SK-N-SH (cell line): ENCODE measurements at regions of chr7 and their contacts with region 1.

Region 1: GRCh38 chr7:129644634-129645230 is 33.2 kb downstream of the NRF1 start:
- DNase-seq: peak; percentile 53
- H3K4me3 ChIP-seq: no peak overlapping the region
- H3K27ac ChIP-seq: no peak overlapping the region
- H3K4me1 ChIP-seq: peaks cover 2 to 9% of the 10 kb centered on the region in 2 experiments; a peak in 2 of 4 replicates
- H3K27me3 ChIP-seq: no peaks in the 10 kb centered on the region
- CTCF ChIP-seq: peak; percentile 84
- EP300 ChIP-seq: no peak
- RAD21 ChIP-seq: peak; percentile 89

Region 2: DNA sequence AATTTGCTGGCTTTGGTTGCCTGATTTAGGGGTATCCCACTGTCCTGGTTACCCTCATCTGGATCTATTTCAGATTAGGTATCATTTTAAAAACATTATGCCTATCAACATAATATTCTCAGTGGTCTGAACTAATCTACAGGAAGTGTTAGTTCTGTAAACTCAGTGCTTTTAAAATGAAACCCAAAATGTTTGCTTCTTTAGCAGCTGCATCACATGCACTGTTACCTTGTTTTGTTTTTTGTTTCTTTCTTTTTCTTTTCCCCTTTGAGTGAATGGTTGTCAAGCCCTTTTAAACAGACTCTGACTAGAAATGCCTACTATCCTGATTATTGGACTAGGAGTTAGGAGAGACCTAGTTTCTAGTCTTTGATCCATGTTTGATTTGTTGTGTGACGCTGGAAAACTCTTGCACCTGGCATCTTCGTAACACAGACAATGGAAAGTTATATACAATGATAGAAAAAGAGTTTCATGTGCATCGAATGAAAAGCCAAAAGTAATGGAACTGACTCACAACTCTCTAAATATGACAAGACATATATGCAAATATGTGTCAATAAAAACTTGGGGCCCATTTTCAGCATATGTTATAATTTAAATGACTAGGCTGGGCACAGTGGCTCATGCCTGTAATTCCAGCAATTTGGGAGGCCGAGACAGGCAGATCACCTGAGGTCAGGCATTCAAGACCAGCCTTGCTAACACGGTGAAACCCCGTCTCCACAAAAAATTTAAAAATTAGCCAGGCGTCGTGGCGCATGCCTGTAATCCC is 262.8 kb before region 1 on chr7:
- CTCF ChIA-PET with region 1: interaction called, 12 read pairs
- POLR2A ChIA-PET with region 1: no interaction called
- DNase-seq: no peak
- H3K4me3 ChIP-seq: no peak overlapping the region
- H3K27ac ChIP-seq: no peak overlapping the region
- H3K4me1 ChIP-seq: no peaks in the 10 kb centered on the region
- H3K27me3 ChIP-seq: no peaks in the 10 kb centered on the region
- CTCF ChIP-seq: no peak
- EP300 ChIP-seq: no peak
- RAD21 ChIP-seq: no peak

Region 3: GRCh38 chr7:129611246-129612111 is 33.3 kb before region 1 on chr7 and contains the start of gene NRF1:
- CTCF ChIA-PET with region 1: interaction called, 74 read pairs
- POLR2A ChIA-PET with region 1: no interaction called
- DNase-seq: peak; percentile 98
- H3K4me3 ChIP-seq: peak within 1 kb of the TSS; percentile 79 to 95
- H3K27ac ChIP-seq: peak within 1 kb of the TSS; percentile 86 to 97
- H3K4me1 ChIP-seq: peaks cover 14 to 25% of the 10 kb centered on the region in 2 experiments
- H3K27me3 ChIP-seq: no peaks in the 10 kb centered on the region
- CTCF ChIP-seq: no peak
- EP300 ChIP-seq: peak in 1 of 2 experiments; percentile 92; a peak in 1 of 4 replicates
- RAD21 ChIP-seq: no peak
- polyA plus RNA-seq, gene NRF1: 10.9 and 16.9 TPM in 2 replicates

Region 4: GRCh38 chr7:129657363-129657762 is 12.6 kb after region 1 on chr7:
- CTCF ChIA-PET with region 1: interaction called, 18 read pairs
- POLR2A ChIA-PET with region 1: no interaction called
- DNase-seq: no peak
- H3K4me3 ChIP-seq: no peak overlapping the region
- H3K27ac ChIP-seq: no peak overlapping the region
- H3K4me1 ChIP-seq: no peaks in the 10 kb centered on the region
- H3K27me3 ChIP-seq: no peaks in the 10 kb centered on the region
- CTCF ChIP-seq: no peak
- EP300 ChIP-seq: no peak
- RAD21 ChIP-seq: no peak

Region 5: DNA sequence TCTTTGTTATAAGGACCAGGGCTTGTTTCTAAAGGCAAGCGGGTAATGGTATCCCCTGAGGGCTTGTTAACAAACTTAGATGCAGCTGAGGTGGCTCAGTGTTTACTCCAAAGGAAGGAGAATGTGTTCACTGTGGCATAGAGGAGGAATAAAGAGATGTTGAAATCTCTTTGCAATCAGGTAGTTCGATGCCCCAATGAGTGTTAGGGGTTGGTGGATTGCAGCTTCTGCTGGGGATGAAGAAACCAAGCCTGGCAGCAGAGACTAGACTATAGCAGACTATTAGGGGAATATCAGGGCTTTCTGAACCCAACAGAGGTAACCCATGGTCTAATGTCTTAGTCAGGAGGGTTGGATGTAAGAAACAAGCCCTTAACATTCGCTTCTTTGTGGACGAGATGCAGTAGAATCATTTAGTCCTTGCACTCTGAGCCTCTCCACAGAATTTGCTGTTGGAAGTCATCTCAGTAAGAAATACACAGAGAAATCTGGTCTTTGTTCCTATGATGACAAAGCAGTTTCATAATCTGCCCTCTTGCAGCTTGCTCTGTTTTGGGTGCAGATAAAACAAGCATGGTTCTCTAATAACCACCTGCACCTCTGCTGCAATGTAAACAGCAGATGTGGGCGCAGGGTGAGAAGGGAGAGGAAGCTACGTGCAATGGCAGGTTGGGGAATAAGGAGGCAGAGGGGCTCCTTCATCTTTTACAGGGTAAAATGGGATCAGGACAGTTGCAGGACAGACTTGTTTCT is 75.4 kb after region 1 on chr7:
- CTCF ChIA-PET with region 1: no interaction called
- POLR2A ChIA-PET with region 1: no interaction called
- DNase-seq: no peak
- H3K4me3 ChIP-seq: no peak overlapping the region
- H3K27ac ChIP-seq: no peak overlapping the region
- H3K4me1 ChIP-seq: peaks cover 0 to 2% of the 10 kb centered on the region in 2 experiments; a peak in 1 of 4 replicates
- H3K27me3 ChIP-seq: no peaks in the 10 kb centered on the region
- CTCF ChIP-seq: no peak
- EP300 ChIP-seq: no peak
- RAD21 ChIP-seq: no peak